GM12878 (cell line): ENCODE measurements at regions of chr1 and their contacts with region 1.

Region 1: DNA sequence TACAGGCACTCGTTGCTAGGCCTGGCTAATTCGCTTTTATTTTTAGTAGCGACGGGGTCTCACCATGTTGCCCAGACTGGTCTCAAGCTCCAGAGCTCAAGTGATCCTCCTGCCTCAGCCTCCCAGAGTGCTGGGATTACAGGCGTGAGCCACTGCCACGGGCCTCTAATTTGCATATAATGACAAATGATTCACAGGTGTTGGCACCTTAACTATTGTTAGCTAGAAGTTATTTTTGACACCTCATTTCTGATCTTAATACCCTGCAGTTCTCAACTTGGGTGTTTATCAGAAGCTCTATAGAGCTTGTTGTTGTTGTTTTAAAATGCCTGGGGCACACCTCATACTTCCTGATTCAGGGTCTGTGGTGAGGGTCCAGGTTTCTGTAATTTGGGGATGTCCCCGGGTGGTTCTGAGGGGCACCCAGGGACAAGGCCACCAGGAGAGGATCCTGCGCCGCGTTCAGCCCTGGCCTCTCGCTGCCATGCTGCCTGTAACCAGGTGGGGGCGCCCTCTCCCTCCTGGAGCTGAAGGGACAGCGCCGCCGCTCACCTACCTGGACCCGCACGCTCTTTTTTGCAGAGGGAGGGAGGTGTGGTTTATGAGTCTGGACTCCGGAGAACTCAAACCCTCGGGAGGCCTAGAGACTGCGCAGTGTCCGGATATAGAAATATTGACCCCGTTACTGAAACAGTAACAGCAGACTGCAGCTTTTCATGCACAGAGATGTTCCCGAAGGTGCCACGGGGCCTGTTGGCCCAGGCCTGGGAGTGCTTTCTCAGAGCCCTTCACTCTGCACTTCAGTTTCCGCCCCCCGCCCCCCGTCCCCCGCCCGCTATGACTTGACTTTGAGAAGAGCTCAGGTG is 23.0 kb upstream of the NEK2 start:
- DNase-seq: peak; percentile 55
- ATAC-seq: peak; percentile 78
- H3K4me3 ChIP-seq: 0 out of 2 replicates have a peak overlapping the region, but pooled peaks have one; percentile 31
- H3K27ac ChIP-seq: no peak overlapping the region
- H3K4me1 ChIP-seq: peaks cover 40% of the 10 kb centered on the region
- H3K27me3 ChIP-seq: no peaks in the 10 kb centered on the region
- CTCF ChIP-seq: peak; percentile 98 to 99 (median 99); a peak in 5 of 6 replicates
- EP300 ChIP-seq: no peak
- POLR2A ChIP-seq: no peak
- RAD21 ChIP-seq: peak; percentile 93

Region 2: DNA sequence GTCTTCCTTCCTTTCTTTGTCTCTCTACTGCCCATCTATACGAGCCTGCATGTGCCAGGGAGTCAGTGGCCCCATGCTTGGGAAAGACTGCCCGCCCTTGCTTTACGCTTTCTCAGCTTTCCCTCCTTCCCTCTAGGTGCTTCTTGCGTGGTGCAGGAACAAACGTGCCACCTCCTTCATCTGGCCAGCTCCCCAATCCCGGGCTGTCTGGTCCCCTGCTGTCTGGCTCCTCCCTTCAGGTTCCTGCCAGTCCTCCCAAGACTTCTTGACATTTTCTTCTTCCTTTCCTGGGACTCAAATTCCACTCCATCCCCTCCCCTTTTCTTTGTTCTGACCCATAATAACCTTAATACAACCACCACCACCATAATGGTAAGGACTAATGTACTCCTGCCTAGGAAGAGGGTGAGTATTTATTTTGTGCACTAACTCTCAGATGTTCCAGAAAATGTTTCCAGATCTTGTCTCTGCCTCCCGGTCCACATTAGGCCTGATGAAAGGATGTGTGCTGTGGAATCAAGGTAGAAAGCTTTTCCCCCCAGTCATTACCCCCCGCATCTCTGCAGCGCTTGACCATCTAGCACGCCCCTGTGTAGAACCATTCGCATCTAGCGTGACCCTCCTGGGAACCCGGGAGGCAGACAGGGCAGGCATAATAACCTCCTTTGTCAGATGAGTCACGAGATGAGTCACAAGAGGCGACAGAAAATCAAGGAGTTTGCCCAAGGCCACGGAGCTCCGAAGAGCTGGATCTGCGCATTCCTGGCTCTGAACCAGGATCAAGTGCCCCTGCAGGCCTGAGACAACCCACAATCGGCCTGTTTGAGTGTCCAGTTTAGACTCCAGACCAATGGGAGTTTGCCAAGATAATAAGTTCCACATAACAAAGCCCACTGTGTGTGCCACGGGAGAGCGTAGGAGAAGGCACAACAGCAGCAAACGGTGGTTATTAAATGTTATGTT is 37.1 kb after region 1 on chr1:
- CTCF ChIA-PET with region 1: interaction called, 46 read pairs
- POLR2A ChIA-PET with region 1: interaction called, 4 read pairs
- RAD21 ChIA-PET with region 1: interaction called, 33 read pairs
- SMC1A ChIA-PET with region 1: interaction called, 36 read pairs
- in situ Hi-C with region 1: no loop called
- intact Hi-C with region 1: loop called (anchors 5 kb)
- DNase-seq: no peak
- ATAC-seq: no peak
- H3K4me3 ChIP-seq: no peak overlapping the region
- H3K27ac ChIP-seq: no peak overlapping the region
- H3K4me1 ChIP-seq: peaks cover 30% of the 10 kb centered on the region
- H3K27me3 ChIP-seq: no peaks in the 10 kb centered on the region
- CTCF ChIP-seq: no peak
- EP300 ChIP-seq: no peak
- POLR2A ChIP-seq: no peak
- RAD21 ChIP-seq: no peak

Region 3: GRCh38 chr1:211788626-211789025 is 90.2 kb after region 1 on chr1:
- CTCF ChIA-PET with region 1: interaction called, 13 read pairs
- POLR2A ChIA-PET with region 1: interaction called, 4 read pairs
- RAD21 ChIA-PET with region 1: interaction called, 14 read pairs
- SMC1A ChIA-PET with region 1: interaction called, 11 read pairs
- in situ Hi-C with region 1: no loop called
- intact Hi-C with region 1: no loop called
- DNase-seq: no peak
- ATAC-seq: no peak
- H3K4me3 ChIP-seq: no peak overlapping the region
- H3K27ac ChIP-seq: no peak overlapping the region
- H3K4me1 ChIP-seq: no peaks in the 10 kb centered on the region
- H3K27me3 ChIP-seq: no peaks in the 10 kb centered on the region
- CTCF ChIP-seq: no peak
- EP300 ChIP-seq: no peak
- POLR2A ChIP-seq: no peak
- RAD21 ChIP-seq: no peak

Region 4: DNA sequence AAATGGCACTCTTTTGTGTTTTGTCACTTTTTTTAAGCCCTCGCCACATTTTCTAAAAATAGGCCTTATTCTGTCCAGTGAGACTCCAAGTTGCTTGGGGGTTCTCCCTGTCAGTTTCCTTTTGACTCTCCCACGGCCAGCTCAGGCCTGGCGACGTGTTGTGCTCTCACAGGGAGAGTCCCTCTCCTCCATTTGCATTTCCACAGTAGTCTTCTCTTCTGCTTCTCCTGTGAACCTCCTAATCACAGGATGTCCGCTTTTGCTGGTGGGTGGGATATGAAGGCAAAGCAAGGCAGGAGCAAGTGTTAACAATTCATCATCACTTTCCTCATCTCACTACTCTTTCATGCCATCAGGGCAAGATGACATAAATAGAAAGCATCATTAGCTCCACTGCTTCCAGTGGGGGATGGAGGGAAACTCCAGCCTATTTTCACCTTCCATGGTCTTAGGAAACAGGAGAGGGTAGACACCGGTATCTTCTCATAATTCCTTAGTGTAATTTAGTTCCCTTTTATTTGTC is 237.1 kb after region 1 on chr1:
- CTCF ChIA-PET with region 1: interaction called, 37 read pairs
- POLR2A ChIA-PET with region 1: interaction called, 21 read pairs
- RAD21 ChIA-PET with region 1: interaction called, 79 read pairs
- SMC1A ChIA-PET with region 1: interaction called, 82 read pairs
- in situ Hi-C with region 1: loop called (anchors 5 kb)
- intact Hi-C with region 1: loop called (anchors 2 kb)
- DNase-seq: peak; percentile 97
- ATAC-seq: peak; percentile 84
- H3K4me3 ChIP-seq: peak overlapping the region; percentile 24; the same call in 1 of the 2 replicates
- H3K27ac ChIP-seq: peak overlapping the region; percentile 68
- H3K4me1 ChIP-seq: peaks cover 62% of the 10 kb centered on the region
- H3K27me3 ChIP-seq: no peaks in the 10 kb centered on the region
- CTCF ChIP-seq: no peak
- EP300 ChIP-seq: peak; percentile 87 to 94
- POLR2A ChIP-seq: no peak
- RAD21 ChIP-seq: 0 out of 2 replicates have a peak, but pooled peaks have one; percentile 4

Region 5: GRCh38 chr1:212012034-212012740 is 313.8 kb after region 1 on chr1:
- CTCF ChIA-PET with region 1: interaction called, 23 read pairs
- POLR2A ChIA-PET with region 1: no interaction called
- RAD21 ChIA-PET with region 1: interaction called, 10 read pairs
- SMC1A ChIA-PET with region 1: interaction called, 12 read pairs
- in situ Hi-C with region 1: no loop called
- intact Hi-C with region 1: no loop called
- DNase-seq: peak; percentile 38
- ATAC-seq: peak; percentile 100
- H3K4me3 ChIP-seq: no peak overlapping the region
- H3K27ac ChIP-seq: no peak overlapping the region
- H3K4me1 ChIP-seq: no peaks in the 10 kb centered on the region
- H3K27me3 ChIP-seq: no peaks in the 10 kb centered on the region
- CTCF ChIP-seq: peak; percentile 95 to 100 (median 98)
- EP300 ChIP-seq: no peak
- POLR2A ChIP-seq: no peak
- RAD21 ChIP-seq: peak; percentile 97

Region 6: GRCh38 chr1:212284744-212285684 is 586.6 kb after region 1 on chr1 and contains the start of gene PPP2R5A:
- CTCF ChIA-PET with region 1: interaction called, 4 read pairs
- POLR2A ChIA-PET with region 1: interaction called, 4 read pairs
- RAD21 ChIA-PET with region 1: interaction called, 3 read pairs
- SMC1A ChIA-PET with region 1: interaction called, 11 read pairs
- in situ Hi-C with region 1: no loop called
- intact Hi-C with region 1: loop called (anchors 5 kb)
- DNase-seq: peak; percentile 97
- ATAC-seq: peak; percentile 94
- H3K4me3 ChIP-seq: peak within 1 kb of the TSS; percentile 88
- H3K27ac ChIP-seq: peak within 1 kb of the TSS; percentile 79
- H3K4me1 ChIP-seq: peaks cover 7% of the 10 kb centered on the region
- H3K27me3 ChIP-seq: no peaks in the 10 kb centered on the region
- CTCF ChIP-seq: peak; percentile 9 to 40 (median 27); a peak in 5 of 6 replicates
- EP300 ChIP-seq: no peak
- POLR2A ChIP-seq: peak; percentile 77
- RAD21 ChIP-seq: no peak
- polyA plus RNA-seq, gene PPP2R5A: 15.4 to 18.2 TPM